Activated CD8-positive, alpha-beta T cell treated with anti-CD3 and anti-CD28 coated beads for 36 hours (primary cell): ENCODE measurements at regions of chr6 and their contacts with region 1.

Region 1: DNA sequence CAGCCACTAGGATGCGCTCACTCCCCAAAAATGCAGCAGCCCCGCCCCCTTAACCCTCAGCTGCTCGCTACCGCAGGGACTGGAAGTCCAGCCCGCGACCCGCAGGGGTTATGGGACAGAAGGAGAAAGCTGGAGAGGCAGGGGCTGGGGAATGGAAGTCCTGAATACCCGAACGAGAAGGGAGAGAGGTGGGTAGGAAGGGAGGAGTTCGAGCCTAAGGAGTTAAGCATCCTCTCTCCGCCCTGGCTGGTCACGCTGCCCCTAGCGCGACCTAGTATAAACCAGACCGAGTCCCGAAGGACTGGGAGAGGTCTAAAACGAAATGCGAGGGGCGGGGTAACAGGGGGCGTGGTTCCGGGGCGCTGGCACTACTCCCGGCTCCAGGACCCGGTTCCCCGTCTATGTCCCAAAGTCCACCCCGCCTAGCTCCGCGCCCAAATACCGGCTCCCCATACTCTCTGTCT is 448 bp upstream of the DDAH2 start:
- DNase-seq: peak; percentile 84
- ATAC-seq: peak; percentile 65
- H3K4me3 Mint-ChIP-seq: peak overlapping the region; percentile 76
- H3K27ac Mint-ChIP-seq: peak overlapping the region; percentile 69
- H3K4me1 Mint-ChIP-seq: peaks cover 68% of the 10 kb centered on the region
- H3K27me3 Mint-ChIP-seq: no peaks in the 10 kb centered on the region
- CTCF ChIP-seq: peak; percentile 25

Region 2: GRCh38 chr6:31513456-31514165 is 215.9 kb before region 1 on chr6:
- CTCF ChIA-PET with region 1: no interaction called
- POLR2A ChIA-PET with region 1: no interaction called
- intact Hi-C with region 1: no loop called
- DNase-seq: no peak
- ATAC-seq: no peak
- H3K4me3 Mint-ChIP-seq: no peak overlapping the region
- H3K27ac Mint-ChIP-seq: no peak overlapping the region
- H3K4me1 Mint-ChIP-seq: no peaks in the 10 kb centered on the region
- H3K27me3 Mint-ChIP-seq: peaks cover 8% of the 10 kb centered on the region
- CTCF ChIP-seq: no peak

Region 3: DNA sequence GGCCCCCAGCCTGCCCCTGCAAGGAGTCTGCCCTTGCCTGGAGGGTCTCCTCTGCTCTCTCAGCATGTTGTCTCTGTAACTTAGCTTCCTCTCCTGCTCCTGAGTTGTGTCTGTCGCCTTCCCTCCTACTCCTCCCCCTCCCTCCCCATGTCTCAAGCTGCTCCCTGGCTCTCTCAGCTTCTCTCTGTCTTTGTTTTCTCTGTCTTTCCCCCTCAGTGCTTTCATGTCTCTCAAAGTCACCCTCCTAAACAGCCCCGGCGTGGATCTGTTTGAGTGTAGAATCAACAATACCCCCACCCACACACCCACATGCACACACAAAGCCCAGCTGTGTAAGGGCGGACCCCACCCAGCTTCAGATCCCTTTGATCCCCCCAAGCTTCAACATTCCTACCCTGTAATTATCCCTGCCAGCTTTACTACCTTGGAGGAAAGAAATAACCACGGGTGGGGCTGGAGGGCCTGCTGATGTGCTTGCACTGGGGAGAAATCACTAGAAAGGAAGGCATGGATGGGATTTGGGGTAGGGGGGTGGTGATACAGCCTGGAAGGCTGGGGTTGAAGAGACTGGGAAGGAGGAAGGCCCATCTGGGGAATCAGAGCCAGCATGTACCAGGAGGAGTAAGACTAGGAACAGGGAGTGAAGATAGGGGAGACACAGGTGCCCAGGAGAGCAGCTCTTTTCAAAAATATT is 15.4 kb before region 1 on chr6:
- CTCF ChIA-PET with region 1: interaction called, 11 read pairs
- POLR2A ChIA-PET with region 1: interaction called, 11 read pairs
- intact Hi-C with region 1: no loop called
- DNase-seq: no peak
- ATAC-seq: no peak
- H3K4me3 Mint-ChIP-seq: no peak overlapping the region
- H3K27ac Mint-ChIP-seq: no peak overlapping the region
- H3K4me1 Mint-ChIP-seq: peaks cover 14% of the 10 kb centered on the region
- H3K27me3 Mint-ChIP-seq: no peaks in the 10 kb centered on the region
- CTCF ChIP-seq: no peak

Region 4: DNA sequence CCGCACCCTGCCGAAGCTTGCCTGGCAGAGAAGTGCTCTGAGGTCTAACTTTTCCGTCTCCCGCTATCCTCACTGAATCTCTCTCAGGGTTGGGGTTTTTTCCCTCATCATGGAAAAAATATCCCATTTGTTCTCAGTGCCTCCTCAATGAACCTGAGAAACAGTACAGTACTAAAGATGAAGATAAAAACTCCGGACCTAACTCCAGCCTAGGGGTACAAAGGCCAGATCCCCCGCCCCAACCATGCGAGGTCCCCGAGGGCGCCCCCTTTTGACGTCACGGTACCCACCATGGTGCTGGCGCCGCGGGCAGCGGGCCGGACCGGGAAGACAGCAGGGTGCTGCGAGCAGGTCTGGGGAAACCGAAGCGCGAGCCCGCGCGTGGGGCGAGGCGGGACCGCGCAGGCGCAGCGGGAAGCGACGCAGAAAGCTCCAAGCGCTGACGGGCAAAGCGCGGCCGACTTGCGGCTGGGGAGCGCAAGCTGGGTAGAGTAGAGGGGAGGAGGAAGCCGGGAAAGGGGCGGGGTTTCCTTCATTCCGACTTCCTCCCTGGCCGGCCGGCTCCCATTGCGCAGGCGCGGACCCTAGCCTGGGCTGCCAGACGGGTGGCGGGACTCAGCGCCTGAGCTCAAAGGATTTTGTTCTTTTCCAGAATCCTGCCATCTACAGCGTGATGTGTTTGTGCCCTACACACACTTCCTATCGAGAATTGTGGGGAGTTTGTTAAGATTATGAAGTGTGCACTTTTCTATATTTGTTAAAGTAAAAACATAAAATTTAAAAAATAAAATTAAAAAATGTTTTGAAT is 77.1 kb after region 1 on chr6 and contains the start of gene LSM2:
- CTCF ChIA-PET with region 1: interaction called, 10 read pairs
- POLR2A ChIA-PET with region 1: interaction called, 3 read pairs
- intact Hi-C with region 1: no loop called
- DNase-seq: peak; percentile 98
- ATAC-seq: peak; percentile 98
- H3K4me3 Mint-ChIP-seq: peak within 1 kb of the TSS; percentile 98
- H3K27ac Mint-ChIP-seq: peak within 1 kb of the TSS; percentile 97
- H3K4me1 Mint-ChIP-seq: peaks cover 19% of the 10 kb centered on the region
- H3K27me3 Mint-ChIP-seq: no peaks in the 10 kb centered on the region
- CTCF ChIP-seq: no peak
- total RNA-seq, gene LSM2: 117 to 120 TPM